ENCODE measurements at regions of chr12 and their contacts with region 1.

Region 1: DNA sequence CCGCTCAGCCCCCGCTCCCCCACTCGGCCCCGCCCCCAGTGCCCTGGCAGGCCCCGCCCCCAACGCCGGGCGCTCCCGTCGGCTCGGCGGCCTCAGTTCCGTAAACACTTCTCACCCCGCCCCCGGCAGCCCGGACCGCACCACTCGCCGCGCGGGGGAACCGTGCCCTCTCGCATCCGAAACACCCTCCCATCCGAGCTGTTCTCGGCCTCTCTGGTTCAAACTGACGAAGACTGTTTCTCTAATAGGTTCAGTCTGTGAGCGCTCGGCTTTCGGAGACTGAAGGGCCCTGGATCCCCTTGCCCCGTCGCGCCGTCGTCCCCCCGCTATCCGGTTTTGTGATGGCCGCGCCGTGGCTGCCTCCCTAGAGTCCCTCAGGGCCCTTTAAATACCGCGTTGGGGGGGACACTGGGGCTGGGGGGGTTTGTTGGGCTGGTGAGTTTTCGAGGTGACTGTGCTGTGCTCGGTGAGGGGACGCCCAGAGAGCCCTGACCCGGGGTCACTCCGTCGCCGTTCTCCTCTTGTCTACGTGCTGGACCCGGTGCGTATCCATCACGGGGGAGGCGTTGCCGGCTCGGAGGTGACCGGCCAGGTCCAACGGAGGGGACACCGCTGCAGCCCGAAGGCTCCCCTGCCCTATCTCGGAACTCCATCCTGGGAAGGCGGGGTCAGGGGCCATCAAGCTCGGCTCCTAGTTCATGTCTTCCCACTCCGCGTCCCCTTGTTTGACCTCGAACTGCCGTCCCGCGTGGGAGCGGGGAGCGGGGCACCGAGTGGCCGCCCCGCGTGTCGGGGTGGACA is at the start of gene TCP11L2:
- DNase-seq: peak; percentile 93
- ATAC-seq: peak; percentile 93 to 95
- H3K4me3 ChIP-seq: peak within 1 kb of the TSS; percentile 97
- H3K27ac ChIP-seq: peak within 1 kb of the TSS; percentile 98
- H3K4me1 ChIP-seq: peaks cover 60% of the 10 kb centered on the region
- H3K27me3 ChIP-seq: no peaks in the 10 kb centered on the region
- CTCF ChIP-seq: no peak
- total RNA-seq, gene TCP11L2: 56.1 TPM

Region 2: GRCh38 chr12:106044773-106045172 is 257.8 kb before region 1 on chr12:
- intact Hi-C with region 1: no loop called
- DNase-seq: no peak
- ATAC-seq: no peak
- H3K4me3 ChIP-seq: no peak overlapping the region
- H3K27ac ChIP-seq: no peak overlapping the region
- H3K4me1 ChIP-seq: no peaks in the 10 kb centered on the region
- H3K27me3 ChIP-seq: no peaks in the 10 kb centered on the region
- CTCF ChIP-seq: no peak

Region 3: GRCh38 chr12:106247674-106248311 is 54.8 kb before region 1 on chr12 and contains the start of gene CKAP4:
- intact Hi-C with region 1: no loop called
- DNase-seq: peak; percentile 86
- ATAC-seq: peak; percentile 82 to 84
- H3K4me3 ChIP-seq: peak within 1 kb of the TSS; percentile 87
- H3K27ac ChIP-seq: peak within 1 kb of the TSS; percentile 98
- H3K4me1 ChIP-seq: peaks cover 51% of the 10 kb centered on the region
- H3K27me3 ChIP-seq: no peaks in the 10 kb centered on the region
- CTCF ChIP-seq: no peak
- total RNA-seq, gene CKAP4: 32.2 TPM

Region 4: DNA sequence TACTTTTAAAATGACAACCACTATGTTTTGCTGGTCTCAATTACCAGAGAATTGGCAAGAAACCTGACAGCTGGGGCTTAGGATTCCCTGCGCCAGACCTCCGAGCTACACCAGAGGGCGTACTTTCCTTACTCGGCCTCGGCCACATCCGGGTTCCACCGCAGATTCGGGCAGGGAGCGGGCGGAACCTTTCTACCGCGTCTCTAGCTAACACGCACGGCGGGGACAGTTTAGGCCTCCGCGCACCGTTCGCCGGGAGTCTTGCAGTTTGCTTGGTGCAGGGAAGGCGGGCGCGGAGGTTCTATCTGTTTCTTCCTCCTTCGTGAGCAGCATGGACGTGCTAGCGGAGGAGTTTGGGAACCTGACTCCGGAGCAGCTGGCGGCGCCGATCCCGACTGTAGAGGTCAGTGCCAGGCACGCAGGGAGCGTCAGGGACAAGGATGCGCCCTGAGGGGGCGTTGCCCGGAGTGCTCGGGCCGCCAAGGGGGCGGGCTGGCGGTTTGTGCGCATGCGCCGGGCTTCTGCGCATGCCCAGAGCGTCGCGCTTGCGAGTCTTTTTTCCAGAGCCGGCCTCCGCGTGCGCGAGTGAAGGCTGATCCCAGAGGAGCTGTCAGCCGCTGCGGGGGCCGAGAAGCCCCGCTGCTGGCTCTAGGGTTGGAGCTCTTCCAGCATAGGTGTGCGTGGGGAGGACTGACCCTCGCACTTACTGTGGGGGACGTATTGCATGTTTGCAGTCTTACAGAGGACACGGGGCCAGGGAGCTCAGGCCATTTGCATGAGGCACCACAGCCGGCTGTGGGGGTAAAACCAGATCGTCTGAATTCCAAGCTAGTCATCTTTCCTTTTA is 55.2 kb after region 1 on chr12 and contains the start of gene POLR3B:
- intact Hi-C with region 1: loop called (anchors 10 kb)
- DNase-seq: peak; percentile 97
- ATAC-seq: peak; percentile 95 to 98
- H3K4me3 ChIP-seq: peak within 1 kb of the TSS; percentile 78
- H3K27ac ChIP-seq: peak within 1 kb of the TSS; percentile 93
- H3K4me1 ChIP-seq: peaks cover 21% of the 10 kb centered on the region
- H3K27me3 ChIP-seq: no peaks in the 10 kb centered on the region
- CTCF ChIP-seq: peak; percentile 92
- total RNA-seq, gene POLR3B: 9.6 TPM